ENCODE measurements at regions of chr1 and their contacts with region 1.

Region 1: DNA sequence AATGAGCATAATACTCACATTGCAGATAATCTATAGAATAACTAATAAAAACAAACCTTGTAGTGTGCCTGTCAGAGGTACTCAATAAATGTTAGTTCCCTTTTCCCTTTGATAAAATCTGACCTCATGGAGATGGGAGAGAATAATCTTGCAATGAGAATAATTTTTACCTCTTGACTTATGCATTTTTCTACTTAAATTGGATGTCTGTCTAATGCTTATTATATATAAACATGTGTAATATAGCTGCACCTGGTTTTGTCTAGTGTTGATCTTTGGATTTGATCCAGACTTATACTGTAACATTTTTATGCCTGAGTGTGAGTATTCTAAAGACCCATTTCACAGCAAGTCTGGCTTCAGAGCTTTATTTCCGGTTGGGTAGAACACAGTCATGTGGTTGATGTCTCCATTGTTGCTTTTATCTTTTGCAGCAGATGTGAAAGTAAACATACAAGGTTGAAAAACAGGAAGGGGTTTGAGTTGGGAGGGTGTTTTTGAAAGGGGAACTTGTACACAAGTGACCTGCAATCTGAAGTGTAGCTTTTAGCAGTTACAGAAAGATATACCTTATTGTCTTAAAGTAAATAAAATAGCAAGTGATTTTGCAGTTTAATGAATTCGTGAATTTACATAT is 12.4 kb downstream of the EPB41 start:
- DNase-seq: no peak
- ATAC-seq: peak; percentile 83
- H3K4me3 Mint-ChIP-seq: peak overlapping the region; percentile 74
- H3K27ac Mint-ChIP-seq: peak overlapping the region; percentile 80
- H3K4me1 Mint-ChIP-seq: peaks cover 70% of the 10 kb centered on the region
- H3K27me3 Mint-ChIP-seq: no peaks in the 10 kb centered on the region
- CTCF ChIP-seq: no peak

Region 2: GRCh38 chr1:28914228-28915030 is 12.3 kb before region 1 on chr1 and contains the start of gene EPB41:
- CTCF ChIA-PET with region 1: no interaction called
- POLR2A ChIA-PET with region 1: interaction called, 17 read pairs
- intact Hi-C with region 1: loop called (anchors 1 kb)
- DNase-seq: peak; percentile 86
- ATAC-seq: peak; percentile 93
- H3K4me3 Mint-ChIP-seq: peak within 1 kb of the TSS; percentile 97
- H3K27ac Mint-ChIP-seq: peak within 1 kb of the TSS; percentile 92
- H3K4me1 Mint-ChIP-seq: peaks cover 46% of the 10 kb centered on the region
- H3K27me3 Mint-ChIP-seq: no peaks in the 10 kb centered on the region
- CTCF ChIP-seq: no peak
- total RNA-seq, gene EPB41: 73.8 and 74.0 TPM in 2 replicates

Region 3: GRCh38 chr1:28986306-28986910 is 59.7 kb after region 1 on chr1:
- CTCF ChIA-PET with region 1: no interaction called
- POLR2A ChIA-PET with region 1: interaction called, 3 read pairs
- intact Hi-C with region 1: loop called (anchors 5 kb)
- DNase-seq: no peak
- ATAC-seq: no peak
- H3K4me3 Mint-ChIP-seq: peak overlapping the region; percentile 67
- H3K27ac Mint-ChIP-seq: peak overlapping the region; percentile 83
- H3K4me1 Mint-ChIP-seq: peaks cover 24% of the 10 kb centered on the region
- H3K27me3 Mint-ChIP-seq: no peaks in the 10 kb centered on the region
- CTCF ChIP-seq: no peak

Measured in activated B cell treated with CpG ODN at 0.5 μM for 24 hours (primary cell).